AG04450 (cell line): ENCODE measurements at regions of chr11 and their contacts with region 1.

Region 1: DNA sequence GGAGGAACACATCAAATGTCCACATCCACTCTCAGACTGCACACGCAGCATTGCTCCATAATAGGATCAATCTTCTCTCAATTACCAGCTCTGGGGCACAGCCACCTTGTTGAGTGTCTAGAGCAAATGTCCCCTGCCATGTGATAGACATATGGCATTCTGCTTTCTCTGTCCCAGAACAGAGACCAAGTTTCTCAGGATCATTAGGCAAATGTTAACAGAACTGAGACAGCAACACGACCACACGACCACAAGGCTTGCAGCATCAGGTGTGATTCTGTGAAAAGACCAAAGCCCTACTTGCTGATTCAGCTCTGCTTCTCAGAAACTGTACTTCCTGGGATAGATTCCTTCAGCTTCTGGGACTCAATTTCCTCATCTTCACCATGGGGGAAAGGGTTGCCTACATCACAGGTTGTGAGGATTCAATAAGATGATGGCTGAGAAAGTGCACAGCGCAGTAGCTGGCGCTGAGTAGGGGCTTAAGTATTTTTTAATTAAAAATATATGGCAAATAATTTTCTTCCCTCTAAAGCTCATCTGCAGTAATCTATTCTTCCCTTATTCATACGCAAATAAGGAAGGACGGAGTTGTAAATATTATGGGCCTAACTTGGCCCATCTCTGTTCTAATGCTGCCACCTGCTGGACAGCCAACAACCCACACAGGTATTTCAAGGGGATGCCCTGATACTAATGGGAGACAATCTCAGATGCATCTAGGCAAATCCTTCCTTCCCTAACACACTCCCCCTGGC is 54.3 kb upstream of the USP47 start:
- DNase-seq: peak; percentile 41
- H3K4me3 ChIP-seq: no peak overlapping the region
- H3K27ac ChIP-seq: no peak overlapping the region
- H3K27me3 ChIP-seq: peaks cover 5% of the 10 kb centered on the region
- CTCF ChIP-seq: peak; percentile 90

Region 2: DNA sequence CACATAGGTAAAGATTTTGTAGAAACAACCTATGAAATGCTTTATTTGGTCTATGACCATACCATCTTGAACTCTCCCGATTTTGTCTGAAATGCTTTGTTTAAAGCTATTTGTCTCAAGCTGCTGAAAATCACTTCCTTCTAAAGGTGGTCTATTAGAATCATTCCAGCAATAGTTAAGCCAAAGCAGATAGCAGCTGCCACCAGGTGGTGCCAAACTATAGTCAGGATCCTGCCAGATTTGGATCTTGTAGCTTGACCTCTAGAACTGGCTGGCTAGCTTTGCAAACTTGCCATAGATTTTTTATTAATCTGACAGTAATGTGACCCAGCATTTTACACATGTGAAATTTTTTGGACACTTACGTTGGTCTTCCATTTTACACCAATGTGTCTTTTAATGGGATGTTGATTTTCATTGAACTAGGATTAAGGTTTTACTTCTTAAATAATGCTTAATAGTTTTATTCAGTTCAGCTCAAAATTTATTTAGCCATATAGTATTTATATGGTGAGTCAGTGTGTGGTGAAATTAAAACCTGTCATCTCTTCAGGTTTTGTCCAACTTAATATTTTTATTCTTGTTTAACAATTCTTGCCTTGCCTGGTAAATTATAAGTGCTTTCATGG is 1016.7 kb before region 1 on chr11:
- CTCF ChIA-PET with region 1: interaction called, 43 read pairs
- POLR2A ChIA-PET with region 1: no interaction called
- DNase-seq: no peak
- H3K4me3 ChIP-seq: no peak overlapping the region
- H3K27ac ChIP-seq: no peak overlapping the region
- H3K27me3 ChIP-seq: no peaks in the 10 kb centered on the region
- CTCF ChIP-seq: peak; percentile 87

Region 3: GRCh38 chr11:10943968-10944367 is 843.5 kb before region 1 on chr11:
- CTCF ChIA-PET with region 1: interaction called, 35 read pairs
- POLR2A ChIA-PET with region 1: no interaction called
- DNase-seq: peak; percentile 34
- H3K4me3 ChIP-seq: no peak overlapping the region
- H3K27ac ChIP-seq: peak overlapping the region; percentile 25
- H3K27me3 ChIP-seq: peaks cover 12% of the 10 kb centered on the region
- CTCF ChIP-seq: no peak

Region 4: GRCh38 chr11:11028017-11028692 is 759.3 kb before region 1 on chr11:
- CTCF ChIA-PET with region 1: interaction called, 177 read pairs
- POLR2A ChIA-PET with region 1: interaction called, 3 read pairs
- DNase-seq: no peak
- H3K4me3 ChIP-seq: no peak overlapping the region
- H3K27ac ChIP-seq: no peak overlapping the region
- H3K27me3 ChIP-seq: no peaks in the 10 kb centered on the region
- CTCF ChIP-seq: peak; percentile 84

Region 5: GRCh38 chr11:11044137-11044855 is 743.2 kb before region 1 on chr11:
- CTCF ChIA-PET with region 1: interaction called, 121 read pairs
- POLR2A ChIA-PET with region 1: no interaction called
- DNase-seq: no peak
- H3K4me3 ChIP-seq: no peak overlapping the region
- H3K27ac ChIP-seq: no peak overlapping the region
- H3K27me3 ChIP-seq: peaks cover 17% of the 10 kb centered on the region
- CTCF ChIP-seq: no peak

Region 6: DNA sequence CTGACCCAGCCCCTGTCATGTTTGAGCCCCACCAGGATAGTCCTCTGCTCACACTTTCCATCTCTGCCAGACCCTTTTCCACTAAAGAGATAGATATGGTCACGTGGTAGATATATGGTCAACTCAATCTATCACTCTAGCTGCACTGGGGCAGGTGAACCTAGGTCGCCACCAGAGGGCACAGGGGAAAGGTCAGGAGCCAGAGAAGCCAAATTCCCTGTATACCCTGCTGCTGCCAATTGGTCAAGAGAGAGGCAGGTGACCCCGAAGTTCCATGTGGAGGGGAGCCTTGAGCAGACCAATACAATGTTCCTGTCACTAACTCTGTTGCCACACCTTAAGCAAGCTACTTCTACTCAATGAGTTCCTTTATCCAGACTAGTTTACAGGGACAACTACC is 64.6 kb before region 1 on chr11:
- CTCF ChIA-PET with region 1: no interaction called
- POLR2A ChIA-PET with region 1: no interaction called
- DNase-seq: no peak
- H3K4me3 ChIP-seq: no peak overlapping the region
- H3K27ac ChIP-seq: no peak overlapping the region
- H3K27me3 ChIP-seq: peaks cover 12% of the 10 kb centered on the region
- CTCF ChIP-seq: no peak